Caco-2 (cell line): ENCODE measurements at regions of chr12 and their contacts with region 1.

Region 1: DNA sequence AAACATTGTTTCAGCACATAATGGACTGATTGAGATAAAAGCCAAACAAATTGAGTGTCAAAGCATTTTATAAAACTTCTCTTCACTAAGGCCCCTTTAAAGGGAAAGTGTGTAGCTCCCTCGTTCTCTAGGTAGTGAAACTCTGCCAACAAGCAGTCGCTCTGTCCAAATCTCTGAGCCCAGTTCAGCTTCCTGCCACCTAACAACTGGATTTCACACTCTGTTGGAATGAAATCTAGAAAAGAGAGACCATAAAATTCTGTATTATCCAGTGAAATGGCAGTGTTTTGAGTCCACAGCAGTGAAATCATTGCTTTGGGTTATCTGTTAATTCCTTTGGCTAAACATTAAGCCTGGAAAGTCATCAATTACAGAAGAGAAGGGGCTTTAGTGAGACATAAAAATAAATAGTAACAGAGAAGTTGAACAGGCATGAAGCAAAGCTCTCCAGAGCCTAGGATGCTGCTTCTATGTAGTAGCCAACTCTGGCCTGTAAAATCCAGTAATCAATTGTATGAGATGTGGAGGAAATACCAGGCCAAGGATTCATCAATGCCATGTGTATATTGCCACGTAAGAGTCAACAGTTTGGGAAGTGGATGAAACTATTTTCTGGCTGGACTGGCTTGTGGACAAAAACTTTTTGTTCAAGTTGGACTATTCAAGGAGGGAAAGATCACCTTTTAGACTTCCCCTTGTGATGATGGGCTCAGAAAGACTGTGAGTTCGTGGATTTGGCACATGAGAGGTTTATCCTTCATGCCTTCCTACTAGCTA is 122.5 kb downstream of the WIF1 start:
- DNase-seq: no peak
- H3K4me3 ChIP-seq: no peak overlapping the region
- H3K4me3 Mint-ChIP-seq: no peak overlapping the region
- H3K27ac Mint-ChIP-seq: peak overlapping the region; percentile 42
- H3K4me1 ChIP-seq: peaks cover 43% of the 10 kb centered on the region
- H3K4me1 Mint-ChIP-seq: peaks cover 31% of the 10 kb centered on the region
- H3K27me3 ChIP-seq: no peaks in the 10 kb centered on the region
- H3K27me3 Mint-ChIP-seq: no peaks in the 10 kb centered on the region
- CTCF ChIP-seq: no peak

Region 2: GRCh38 chr12:65022960-65023359 is 24.4 kb after region 1 on chr12:
- CTCF ChIA-PET with region 1: no interaction called
- POLR2A ChIA-PET with region 1: no interaction called
- intact Hi-C with region 1: loop called (anchors 2 kb)
- DNase-seq: no peak
- H3K4me3 ChIP-seq: no peak overlapping the region
- H3K4me3 Mint-ChIP-seq: no peak overlapping the region
- H3K27ac Mint-ChIP-seq: no peak overlapping the region
- H3K4me1 ChIP-seq: peaks cover 29% of the 10 kb centered on the region
- H3K4me1 Mint-ChIP-seq: no peaks in the 10 kb centered on the region
- H3K27me3 ChIP-seq: no peaks in the 10 kb centered on the region
- H3K27me3 Mint-ChIP-seq: no peaks in the 10 kb centered on the region
- CTCF ChIP-seq: no peak

Region 3: GRCh38 chr12:65139389-65139788 is 140.8 kb after region 1 on chr12:
- CTCF ChIA-PET with region 1: no interaction called
- POLR2A ChIA-PET with region 1: no interaction called
- intact Hi-C with region 1: no loop called
- DNase-seq: no peak
- H3K4me3 ChIP-seq: no peak overlapping the region
- H3K4me3 Mint-ChIP-seq: no peak overlapping the region
- H3K27ac Mint-ChIP-seq: no peak overlapping the region
- H3K4me1 ChIP-seq: no peaks in the 10 kb centered on the region
- H3K4me1 Mint-ChIP-seq: no peaks in the 10 kb centered on the region
- H3K27me3 ChIP-seq: no peaks in the 10 kb centered on the region
- H3K27me3 Mint-ChIP-seq: peaks cover 20% of the 10 kb centered on the region
- CTCF ChIP-seq: no peak